H1 (cell line): ENCODE measurements at regions of chr21 and their contacts with region 1.

Region 1: DNA sequence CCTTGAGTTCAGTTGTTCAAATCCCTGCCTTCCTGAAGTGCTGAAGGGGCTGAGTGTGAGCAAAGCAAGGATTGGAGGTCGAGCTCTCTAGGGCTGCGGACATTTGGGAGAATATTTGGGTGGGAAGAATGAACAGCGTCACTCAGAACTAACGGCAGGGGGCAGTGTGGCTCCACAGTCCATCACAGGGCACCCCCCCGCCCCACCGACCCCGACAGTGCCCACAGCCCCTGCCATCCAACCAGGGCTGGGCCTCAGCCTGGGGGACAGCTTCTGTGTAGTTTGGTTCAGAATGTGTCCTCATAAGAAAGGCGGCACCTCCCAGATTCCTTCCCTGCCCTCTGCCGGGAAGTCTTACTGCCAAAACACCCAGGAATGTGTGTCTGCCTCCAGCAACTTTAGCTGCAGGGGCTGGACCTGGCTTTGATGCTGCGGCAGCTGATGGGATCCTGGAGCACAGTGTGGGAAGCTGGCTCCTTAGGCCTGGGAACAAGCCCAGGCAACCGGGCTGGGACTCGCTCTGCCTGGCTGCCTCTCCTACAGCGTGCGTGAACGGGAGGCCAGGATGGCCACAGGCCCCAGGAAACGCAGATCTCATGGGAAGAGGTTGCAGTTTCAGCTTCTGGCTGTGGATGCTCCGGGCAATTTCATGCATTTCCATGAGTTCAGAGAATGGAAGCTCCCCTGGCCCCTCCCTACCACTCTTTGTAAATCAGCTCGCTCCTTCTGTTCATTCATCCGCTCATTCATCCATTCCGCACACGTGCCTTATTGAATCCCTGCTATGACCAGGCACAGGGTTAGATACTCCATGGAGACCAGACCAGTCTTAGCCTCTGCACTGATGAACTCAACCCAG is 104.9 kb upstream of the TMPRSS2 start:
- DNase-seq: peak in 1 of 2 experiments; percentile 88
- H3K4me3 ChIP-seq: peak overlapping the region in 1 of 4 experiments; percentile 6; a peak in 1 of 8 replicates
- H3K27ac ChIP-seq: 0 out of 2 replicates have a peak overlapping the region, but pooled peaks have one; percentile 16
- H3K4me1 ChIP-seq: peaks cover 0 to 13% (median 10%) of the 10 kb centered on the region in 4 experiments; a peak in 5 of 7 replicates
- H3K27me3 ChIP-seq: peaks cover 0 to 2% (median under 1%) of the 10 kb centered on the region in 4 experiments; a peak in 1 of 7 replicates
- CTCF ChIP-seq: peak; percentile 66 to 82 (median 82)
- EP300 ChIP-seq: no peak
- POLR2A ChIP-seq: no peak
- RAD21 ChIP-seq: peak; percentile 86 to 87

Region 2: GRCh38 chr21:41589131-41589530 is 23.8 kb before region 1 on chr21:
- CTCF ChIA-PET with region 1: interaction called, 18 read pairs
- POLR2A ChIA-PET with region 1: no interaction called
- DNase-seq: peak in 1 of 2 experiments; percentile 45
- H3K4me3 ChIP-seq: no peak overlapping the region
- H3K27ac ChIP-seq: no peak overlapping the region
- H3K4me1 ChIP-seq: peaks cover 4 to 12% (median 7%) of the 10 kb centered on the region in 4 experiments; a peak in 4 of 7 replicates
- H3K27me3 ChIP-seq: no peaks in the 10 kb centered on the region; a peak in 1 of 7 replicates
- CTCF ChIP-seq: peak in 2 of 3 experiments; percentile 48 to 49; a peak in 2 of 4 replicates
- EP300 ChIP-seq: no peak
- POLR2A ChIP-seq: no peak
- RAD21 ChIP-seq: peak; percentile 3 to 35; a peak in 2 of 4 replicates

Region 3: DNA sequence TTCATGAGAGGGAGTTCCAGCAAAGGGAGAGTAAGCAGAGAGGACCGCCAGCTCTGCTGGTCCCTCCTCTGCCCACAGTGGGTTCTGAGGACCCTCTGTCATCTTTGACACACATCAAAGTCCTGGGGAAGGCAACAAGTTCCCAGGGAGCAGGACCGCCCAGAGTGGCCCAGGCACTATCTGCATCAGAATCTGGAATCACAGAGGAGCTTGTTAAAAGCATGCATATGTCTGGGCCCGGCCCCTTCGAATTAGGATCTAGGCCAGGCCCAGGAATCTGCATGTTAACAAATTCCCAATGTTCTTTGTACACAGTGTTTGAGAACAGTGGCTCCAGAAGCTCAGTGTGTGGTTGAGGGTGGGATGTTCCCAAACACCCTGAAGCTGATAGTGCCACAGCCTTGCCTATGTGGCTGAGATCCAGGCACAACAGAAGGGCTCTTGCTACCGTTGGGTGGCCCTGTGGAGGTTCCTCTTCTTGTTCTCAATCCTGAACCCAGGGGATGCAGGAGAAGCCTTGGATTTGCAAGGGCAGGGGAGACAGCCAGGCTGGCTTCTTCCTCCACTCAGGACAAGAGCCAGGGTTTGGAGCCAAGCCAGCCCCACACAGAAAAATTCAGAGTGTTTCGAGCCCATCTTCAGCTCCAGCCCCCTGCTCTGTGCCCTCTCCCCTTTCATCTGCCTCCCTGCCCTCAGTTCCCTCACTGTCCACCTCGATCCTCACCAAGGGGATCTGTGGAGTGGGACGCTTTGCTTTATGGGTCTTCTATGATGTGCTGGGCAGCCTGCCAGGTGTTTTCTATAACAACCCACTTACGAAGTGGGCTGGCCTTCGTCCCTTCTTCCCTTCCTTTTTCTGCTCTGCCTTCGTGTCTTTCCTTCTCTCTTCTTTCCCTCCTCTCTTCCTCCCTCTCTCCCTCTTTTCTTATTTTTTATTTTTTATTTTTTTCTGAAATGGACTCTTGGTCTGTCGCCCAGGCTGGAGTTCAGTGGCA is 24.0 kb after region 1 on chr21:
- CTCF ChIA-PET with region 1: interaction called, 55 read pairs
- POLR2A ChIA-PET with region 1: no interaction called
- DNase-seq: no peak
- H3K4me3 ChIP-seq: no peak overlapping the region
- H3K27ac ChIP-seq: no peak overlapping the region
- H3K4me1 ChIP-seq: peaks cover 0 to 2% (median 1%) of the 10 kb centered on the region in 4 experiments; a peak in 2 of 7 replicates
- H3K27me3 ChIP-seq: no peaks in the 10 kb centered on the region
- CTCF ChIP-seq: no peak
- EP300 ChIP-seq: no peak
- POLR2A ChIP-seq: no peak
- RAD21 ChIP-seq: no peak

Region 4: DNA sequence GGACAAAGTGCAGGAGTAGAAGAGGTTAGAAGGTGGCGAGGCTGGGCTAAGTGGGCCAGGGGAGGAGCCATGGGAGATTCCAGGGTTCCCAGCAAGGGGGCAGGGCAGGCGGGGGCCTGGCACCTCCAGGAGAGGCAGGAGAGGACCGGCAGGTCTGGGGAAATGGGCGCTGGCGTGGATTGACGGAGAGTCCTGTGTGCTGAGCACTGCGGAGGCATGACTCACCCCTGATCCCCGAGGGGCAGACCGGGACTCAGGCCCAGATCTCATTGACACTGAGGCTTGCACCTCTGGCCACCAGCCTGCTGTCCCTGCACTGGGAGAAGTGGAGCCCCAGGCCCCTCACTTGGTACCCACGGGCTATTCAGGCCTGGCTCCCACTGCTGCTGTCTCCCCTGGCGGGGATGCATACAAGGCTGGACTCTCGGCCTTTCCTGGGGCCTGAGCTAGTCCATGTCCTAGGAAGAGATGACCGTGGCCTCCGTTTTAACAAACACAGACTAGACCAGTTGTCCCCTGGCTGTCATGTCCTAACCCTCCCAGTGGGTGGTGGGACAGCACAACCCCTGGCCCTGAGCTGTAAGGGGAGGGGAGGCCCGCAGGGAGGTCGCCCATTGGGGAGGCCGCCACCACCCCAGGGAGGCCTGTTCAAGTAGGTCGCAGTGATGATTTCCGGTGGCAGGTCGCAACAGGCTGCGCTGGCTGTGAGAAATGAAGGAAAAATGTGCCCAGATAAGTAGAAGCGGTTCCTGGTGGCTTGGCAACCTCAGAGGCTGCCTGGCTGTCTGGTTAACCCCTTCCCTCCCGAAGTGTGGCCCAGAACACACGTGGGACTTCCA is 114.3 kb after region 1 on chr21:
- CTCF ChIA-PET with region 1: interaction called, 27 read pairs
- POLR2A ChIA-PET with region 1: no interaction called
- DNase-seq: no peak
- H3K4me3 ChIP-seq: no peak overlapping the region
- H3K27ac ChIP-seq: no peak overlapping the region
- H3K4me1 ChIP-seq: peaks cover 0 to 19% (median 10%) of the 10 kb centered on the region in 4 experiments; a peak in 5 of 7 replicates
- H3K27me3 ChIP-seq: peaks cover 7 to 33% (median 22%) of the 10 kb centered on the region in 4 experiments
- CTCF ChIP-seq: no peak
- EP300 ChIP-seq: no peak
- POLR2A ChIP-seq: no peak
- RAD21 ChIP-seq: no peak

Region 5: DNA sequence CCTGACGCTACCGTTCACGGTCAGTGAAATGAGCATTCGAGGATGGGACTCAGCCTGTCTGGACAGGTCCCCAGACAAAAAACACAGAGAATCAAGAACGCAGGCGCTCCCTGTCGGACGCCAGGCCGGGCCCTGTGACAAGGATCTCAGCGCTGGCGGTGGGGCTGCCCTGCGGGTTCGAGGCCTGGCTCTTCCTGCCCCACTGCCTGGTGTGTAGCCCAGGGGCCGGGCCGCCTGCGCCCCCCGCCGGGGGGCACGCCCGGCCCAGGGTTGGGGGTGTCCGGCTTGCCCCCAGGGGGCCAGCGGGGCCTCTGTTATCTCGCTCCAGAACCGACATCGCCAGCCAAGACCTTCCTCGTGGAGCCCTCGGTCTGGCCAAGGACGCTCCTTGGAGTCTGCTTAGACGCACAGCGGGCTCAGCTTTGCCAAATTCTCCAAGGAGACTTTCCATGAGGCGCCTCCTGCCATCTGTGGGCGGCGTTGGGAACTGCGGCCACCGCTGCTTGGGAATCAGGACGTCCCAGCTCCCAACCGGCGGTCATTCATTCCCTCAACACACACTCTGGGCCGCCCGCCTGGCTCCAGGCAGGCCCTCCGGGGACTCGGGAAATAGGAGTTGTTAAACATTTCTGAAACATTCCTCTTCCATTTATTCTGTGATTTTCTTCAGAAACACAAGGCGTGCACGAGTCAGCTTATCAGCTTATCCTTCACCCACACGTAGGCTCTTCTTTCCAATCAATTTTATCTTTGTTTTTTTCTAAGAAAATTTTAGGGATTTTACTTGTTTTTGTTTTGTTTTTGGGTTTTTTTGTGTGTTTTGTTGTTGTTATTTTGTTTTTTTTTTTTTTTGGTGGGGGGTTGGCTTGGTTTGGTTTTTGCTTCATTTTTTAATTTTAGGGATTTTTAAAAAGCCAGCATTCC is 165.3 kb after region 1 on chr21:
- CTCF ChIA-PET with region 1: interaction called, 82 read pairs
- POLR2A ChIA-PET with region 1: interaction called, 6 read pairs
- DNase-seq: peak; percentile 79 to 97
- H3K4me3 ChIP-seq: peak overlapping the region in 1 of 4 experiments; percentile 50; a peak in 4 of 8 replicates
- H3K27ac ChIP-seq: no peak overlapping the region; the same call in 1 of the 2 replicates
- H3K4me1 ChIP-seq: peaks cover 2 to 12% (median 5%) of the 10 kb centered on the region in 4 experiments; a peak in 5 of 7 replicates
- H3K27me3 ChIP-seq: peaks cover 0 to 3% (median under 1%) of the 10 kb centered on the region in 4 experiments; a peak in 4 of 7 replicates
- CTCF ChIP-seq: peak; percentile 81 to 90 (median 86)
- EP300 ChIP-seq: no peak
- POLR2A ChIP-seq: no peak; a peak in 1 of 3 replicates
- RAD21 ChIP-seq: peak; percentile 85 to 91

Region 6: DNA sequence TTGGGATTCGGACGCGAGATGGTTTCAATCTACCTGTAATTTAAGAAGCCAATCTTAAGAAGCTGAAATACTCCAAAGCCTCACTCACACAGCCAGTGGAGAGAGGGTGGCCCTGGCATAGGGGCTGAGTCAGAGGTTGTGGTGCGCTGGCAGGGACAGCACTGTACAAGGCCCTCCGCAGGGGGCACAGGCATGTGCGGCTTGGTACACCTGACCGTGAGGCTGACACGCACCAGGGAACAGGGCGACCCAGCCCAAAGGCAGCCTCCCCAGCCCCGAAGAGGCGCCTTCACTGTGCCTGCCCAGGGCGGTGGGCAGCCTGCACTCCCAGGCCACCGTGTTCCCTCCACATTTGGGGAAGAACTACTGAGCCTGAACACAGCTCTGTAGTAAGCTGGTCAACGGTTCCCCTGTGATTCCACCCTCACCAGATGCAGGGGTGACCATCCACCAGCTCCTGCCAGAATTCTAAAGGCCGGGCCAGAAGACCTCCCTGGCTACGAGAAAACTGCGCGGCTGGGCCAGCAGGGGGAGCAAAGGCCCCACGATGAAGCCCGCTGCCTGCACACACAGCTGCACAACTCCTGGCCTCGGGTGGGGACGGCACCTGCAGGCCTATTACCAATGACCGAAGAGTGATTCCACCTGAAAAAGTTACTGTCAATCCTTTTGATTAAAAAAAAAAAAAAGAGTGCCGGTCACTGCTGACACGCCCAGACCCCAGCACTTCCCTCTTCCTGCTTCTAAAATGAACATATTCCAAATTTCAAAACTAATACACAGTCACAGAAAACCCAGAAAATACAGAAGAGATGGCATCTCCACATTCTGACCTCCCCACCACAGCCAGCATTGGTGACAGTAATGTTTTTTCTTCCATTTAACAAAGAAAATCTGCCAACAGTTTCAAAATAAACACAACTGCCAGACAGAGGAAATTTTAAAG is 203.6 kb after region 1 on chr21:
- CTCF ChIA-PET with region 1: interaction called, 132 read pairs
- POLR2A ChIA-PET with region 1: no interaction called
- DNase-seq: peak; percentile 31 to 78
- H3K4me3 ChIP-seq: no peak overlapping the region
- H3K27ac ChIP-seq: no peak overlapping the region
- H3K4me1 ChIP-seq: peaks cover 0 to 1% (median 0%) of the 10 kb centered on the region in 4 experiments; a peak in 1 of 7 replicates
- H3K27me3 ChIP-seq: no peaks in the 10 kb centered on the region
- CTCF ChIP-seq: peak; percentile 85 to 89 (median 88)
- EP300 ChIP-seq: no peak
- POLR2A ChIP-seq: no peak
- RAD21 ChIP-seq: peak; percentile 77 to 83

Region 7: GRCh38 chr21:42012344-42012743 is 399.4 kb after region 1 on chr21:
- CTCF ChIA-PET with region 1: no interaction called
- POLR2A ChIA-PET with region 1: no interaction called
- DNase-seq: no peak
- H3K4me3 ChIP-seq: no peak overlapping the region
- H3K27ac ChIP-seq: no peak overlapping the region
- H3K4me1 ChIP-seq: no peaks in the 10 kb centered on the region; a peak in 1 of 7 replicates
- H3K27me3 ChIP-seq: peaks cover 0 to 15% (median 13%) of the 10 kb centered on the region in 4 experiments; a peak in 6 of 7 replicates
- CTCF ChIP-seq: no peak
- EP300 ChIP-seq: no peak
- POLR2A ChIP-seq: no peak
- RAD21 ChIP-seq: no peak

Region 8: DNA sequence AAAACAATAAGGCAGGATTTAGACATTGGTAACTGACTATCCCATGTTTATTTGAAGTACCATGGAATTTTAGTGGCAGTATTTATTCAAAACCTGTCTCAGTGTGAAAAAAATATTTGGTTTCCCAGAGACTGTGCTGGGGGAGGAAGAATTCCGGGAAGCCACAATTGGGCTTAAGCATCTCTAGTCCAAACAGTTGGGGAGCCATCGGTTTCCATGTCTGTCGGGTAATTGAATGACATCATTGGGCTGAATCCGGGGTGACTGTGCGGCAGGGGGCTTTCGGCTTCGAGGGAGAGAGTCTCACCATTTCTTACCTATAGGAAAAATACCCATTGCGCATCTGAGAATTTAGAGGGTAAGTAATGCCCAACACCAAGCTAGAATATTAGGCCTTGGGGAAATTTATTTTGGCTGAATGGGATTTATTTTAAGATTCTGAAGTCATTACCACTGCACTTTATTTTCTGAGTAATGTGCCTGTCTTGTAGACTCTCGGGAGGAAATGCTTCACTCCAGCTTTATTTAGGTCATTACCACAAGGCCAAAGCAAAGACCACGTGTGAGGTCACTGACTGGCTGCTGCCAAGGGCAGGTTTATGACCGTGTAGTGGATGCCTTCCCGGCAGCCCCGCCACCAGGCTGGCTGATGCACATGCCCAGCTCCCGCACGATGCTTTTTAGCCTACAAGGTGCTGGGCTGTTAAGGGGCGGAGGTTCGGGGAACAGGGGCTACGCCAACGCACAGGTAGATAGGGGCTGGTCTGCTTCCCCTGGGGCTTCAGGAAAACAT is 435.1 kb after region 1 on chr21:
- CTCF ChIA-PET with region 1: no interaction called
- POLR2A ChIA-PET with region 1: no interaction called
- DNase-seq: no peak
- H3K4me3 ChIP-seq: no peak overlapping the region
- H3K27ac ChIP-seq: no peak overlapping the region
- H3K4me1 ChIP-seq: no peaks in the 10 kb centered on the region; a peak in 1 of 7 replicates
- H3K27me3 ChIP-seq: no peaks in the 10 kb centered on the region
- CTCF ChIP-seq: no peak
- EP300 ChIP-seq: no peak
- POLR2A ChIP-seq: no peak
- RAD21 ChIP-seq: no peak

Region 9: DNA sequence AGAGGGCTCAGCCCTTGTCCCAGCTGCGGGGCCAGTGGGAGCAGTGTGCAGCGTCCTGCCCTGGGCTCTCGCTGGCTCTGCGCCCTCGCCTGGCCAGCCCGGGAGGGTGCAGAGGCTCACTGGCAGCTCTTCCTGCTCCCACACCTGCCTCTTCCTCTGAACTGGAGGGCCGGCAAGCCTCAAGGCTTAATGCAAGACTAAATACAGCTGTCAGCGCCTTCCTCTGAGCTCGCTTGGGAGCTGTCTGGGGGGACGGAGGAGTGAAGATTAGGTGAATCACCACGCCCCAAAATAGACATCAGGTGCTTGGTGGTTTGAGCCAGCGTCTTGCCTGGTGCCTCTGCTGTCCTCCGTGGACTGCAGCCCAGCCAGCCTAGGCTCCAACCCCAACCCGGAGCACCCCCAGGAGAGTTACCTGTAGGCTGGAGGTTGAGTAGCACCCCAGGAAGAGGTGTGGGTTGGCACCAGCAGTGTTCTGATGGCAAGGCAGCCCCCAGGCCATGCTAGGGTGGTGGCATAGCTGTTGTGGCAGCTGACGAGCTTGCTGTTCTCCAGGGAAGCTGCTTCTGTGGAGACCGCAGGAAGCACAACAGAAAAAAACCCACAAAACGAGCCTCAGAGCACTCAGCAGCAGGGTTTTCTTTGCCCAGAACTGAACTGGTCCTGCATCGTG is 495.1 kb after region 1 on chr21:
- CTCF ChIA-PET with region 1: interaction called, 17 read pairs
- POLR2A ChIA-PET with region 1: no interaction called
- DNase-seq: peak in 1 of 2 experiments; percentile 50
- H3K4me3 ChIP-seq: no peak overlapping the region
- H3K27ac ChIP-seq: no peak overlapping the region
- H3K4me1 ChIP-seq: peaks cover 0 to 7% (median 1%) of the 10 kb centered on the region in 4 experiments; a peak in 2 of 7 replicates
- H3K27me3 ChIP-seq: no peaks in the 10 kb centered on the region
- CTCF ChIP-seq: peak; percentile 89 to 93 (median 89)
- EP300 ChIP-seq: no peak
- POLR2A ChIP-seq: no peak
- RAD21 ChIP-seq: peak; percentile 67 to 81